Dorsolateral prefrontal cortex (tissue), 120 donors: ENCODE measurements at regions of chr1 and their contacts with region 1.

Region 1: DNA sequence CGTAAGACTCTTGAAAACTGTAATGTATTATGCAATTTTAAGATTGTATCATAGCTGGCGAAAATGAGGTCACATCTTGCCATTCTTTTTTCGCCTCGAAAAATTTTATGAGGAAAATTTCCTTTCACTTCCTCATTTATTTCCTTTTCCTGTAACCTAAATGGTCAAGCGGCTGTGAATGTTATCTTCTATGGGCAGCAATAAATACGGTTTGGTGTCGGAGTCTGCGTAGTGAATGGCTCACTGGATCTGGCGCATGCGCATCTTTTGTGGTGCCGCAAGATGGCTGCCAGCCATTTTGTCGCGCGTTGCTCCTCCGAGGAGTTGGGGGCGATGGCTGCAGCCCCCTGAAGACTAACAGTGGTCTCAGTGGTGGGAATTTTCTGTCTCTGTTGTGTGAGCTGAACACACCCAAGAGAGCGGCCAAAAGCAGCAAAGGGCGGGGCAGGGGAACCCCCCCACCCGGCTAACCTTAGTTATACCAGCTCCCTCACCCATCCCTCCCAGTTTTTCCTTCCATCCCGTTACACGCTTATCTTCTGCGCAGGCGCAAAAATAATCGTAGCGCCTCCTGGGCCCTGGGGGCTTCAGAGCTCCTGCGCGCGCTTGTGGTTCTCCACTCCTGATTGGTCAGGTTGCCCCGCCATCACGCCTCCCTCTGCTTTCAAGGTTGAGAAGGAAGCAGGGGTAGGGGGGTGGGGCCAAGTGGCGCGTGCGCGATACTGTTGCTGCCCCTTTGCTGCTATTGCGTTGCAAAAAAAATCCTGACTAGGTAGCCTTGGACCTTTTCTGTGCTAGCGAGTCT is at the start of gene RPRD2:
- DNase-seq: peak; percentile 98 to 99 (median 99)
- H3K4me3 ChIP-seq: peak within 1 kb of the TSS; percentile 52 to 97 (median 86)
- H3K27ac ChIP-seq: peak within 1 kb of the TSS; percentile 92 to 100 (median 100)
- H3K27me3 ChIP-seq: no peaks in the 10 kb centered on the region
- CTCF ChIP-seq: peak in 10 of 56 donors; percentile 5 to 33 (median 14)
- total RNA-seq, gene RPRD2: 37.9 to 58.4 (median 48.0) TPM

Region 2: DNA sequence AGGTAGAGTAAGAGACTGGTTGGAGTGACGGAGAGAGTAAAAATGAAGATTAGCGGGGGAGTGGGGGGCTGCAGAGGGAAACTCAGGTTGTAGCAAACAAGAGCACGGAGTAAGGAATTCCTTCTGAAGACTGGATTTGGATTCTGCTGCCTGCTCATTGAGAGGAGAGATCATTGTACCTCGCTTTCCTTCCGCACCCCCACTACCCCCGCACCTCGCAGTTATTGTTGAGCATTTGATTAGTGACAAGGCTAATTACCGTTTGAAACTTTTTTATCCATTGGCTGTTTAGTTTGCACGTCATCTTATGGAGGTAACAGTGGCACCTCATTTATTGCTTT is 41.8 kb before region 1 on chr1:
- intact Hi-C with region 1: loop called in 1 of 2 experiments (anchors 5 kb)
- DNase-seq: no peak
- H3K4me3 ChIP-seq: peak overlapping the region; percentile 62 to 97 (median 82)
- H3K27ac ChIP-seq: peak overlapping the region in 54 of 59 donors; percentile 35 to 93 (median 82)
- H3K27me3 ChIP-seq: no peaks in the 10 kb centered on the region
- CTCF ChIP-seq: no peak

Region 3: GRCh38 chr1:150429805-150430204 is 66.2 kb after region 1 on chr1:
- intact Hi-C with region 1: loop called in 1 of 2 experiments (anchors 5 kb)
- DNase-seq: no peak
- H3K4me3 ChIP-seq: no peak overlapping the region
- H3K27ac ChIP-seq: peak overlapping the region in 2 of 59 donors; percentile 4 to 13
- H3K27me3 ChIP-seq: no peaks in the 10 kb centered on the region
- CTCF ChIP-seq: peak in 33 of 56 donors; percentile 13 to 56 (median 27)

Region 4: DNA sequence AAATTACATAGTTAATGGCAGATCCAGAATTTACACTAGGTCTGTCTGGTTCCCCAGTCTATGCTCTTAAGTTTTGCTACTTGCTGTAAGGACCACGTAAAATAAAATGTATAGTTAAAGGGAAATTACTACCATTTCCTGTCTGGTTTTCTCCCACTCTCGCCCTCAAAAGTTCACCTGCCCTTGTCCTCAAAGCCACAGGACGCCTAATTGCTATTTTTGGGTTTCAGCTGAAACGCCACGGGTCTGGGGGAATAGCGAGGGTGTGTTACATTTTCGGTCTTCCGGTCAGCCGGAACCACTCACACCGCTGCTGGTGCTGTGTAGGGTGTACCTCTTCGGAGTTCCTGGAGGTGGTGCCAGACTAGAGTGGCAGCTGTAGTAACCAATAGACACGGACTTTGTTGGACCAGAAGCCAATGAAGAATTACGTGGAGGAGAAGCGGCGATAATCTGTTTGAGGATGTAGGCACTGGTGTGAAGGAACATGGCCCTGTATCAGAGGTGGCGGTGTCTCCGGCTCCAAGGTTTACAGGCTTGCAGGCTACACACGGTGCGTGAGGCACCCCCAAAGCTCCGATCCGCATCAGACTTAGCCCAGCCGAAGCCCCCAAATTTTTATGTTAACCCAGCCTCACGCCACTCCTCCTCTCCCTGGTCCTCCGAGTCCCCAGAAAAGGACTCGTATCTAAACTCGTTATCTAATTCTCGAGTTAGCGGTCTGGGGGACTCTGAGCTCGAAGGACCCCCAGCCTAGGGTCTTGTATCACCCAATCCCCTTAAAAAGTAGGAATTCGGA is 123.5 kb after region 1 on chr1 and contains the start of gene TARS2:
- intact Hi-C with region 1: loop called in 1 of 2 experiments (anchors 10 kb)
- DNase-seq: peak; percentile 63 to 97 (median 92)
- H3K4me3 ChIP-seq: peak within 1 kb of the TSS; percentile 55 to 99 (median 84)
- H3K27ac ChIP-seq: peak within 1 kb of the TSS in 49 of 59 donors; percentile 16 to 87 (median 71)
- H3K27me3 ChIP-seq: no peaks in the 10 kb centered on the region
- CTCF ChIP-seq: peak in 54 of 56 donors; percentile 19 to 70 (median 50)
- total RNA-seq, gene TARS2: 30.3 to 63.1 (median 45.8) TPM